Sciatic nerve (tissue), 2 donors: ENCODE measurements at regions of chr9 and their contacts with region 1.

Region 1: DNA sequence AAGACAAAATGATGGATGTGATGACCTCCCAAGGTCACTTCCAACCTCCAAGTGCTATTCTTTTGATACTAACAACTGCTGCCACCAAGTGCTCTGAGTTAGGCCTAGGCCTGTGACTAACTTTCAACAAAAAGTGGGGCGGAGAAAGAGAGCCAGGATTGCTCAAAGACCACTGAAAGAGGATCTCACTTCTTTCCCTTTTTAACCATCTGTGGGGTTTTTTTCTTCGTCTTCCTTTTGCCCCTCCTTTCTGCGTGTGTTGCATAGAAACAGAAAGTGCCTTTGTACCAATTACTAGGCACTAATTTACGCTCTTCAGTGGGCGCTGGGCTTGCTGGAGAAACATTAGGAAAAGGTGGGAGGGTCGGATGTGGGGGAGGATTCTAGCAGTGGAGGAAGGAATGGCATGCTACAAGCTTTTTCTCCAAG is 8.0 kb downstream of the KLF9 start:
- DNase-seq: no peak
- ATAC-seq: peak; percentile 6

Region 2: GRCh38 chr9:70352802-70353201 is 53.6 kb before region 1 on chr9:
- intact Hi-C with region 1: loop called (anchors 10 kb)
- DNase-seq: no peak
- ATAC-seq: peak; percentile 70